B cell (primary cell): ENCODE measurements at regions of chr1 and their contacts with region 1.

Region 1: GRCh38 chr1:160460683-160461287 is 60.4 kb downstream of the VANGL2 start:
- DNase-seq: no peak
- ATAC-seq: peak; percentile 48
- H3K4me3 ChIP-seq: peak overlapping the region in 3 of 5 experiments; percentile 5 to 58 (median 24)
- H3K4me3 Mint-ChIP-seq: peak overlapping the region; percentile 80
- H3K27ac ChIP-seq: peak overlapping the region; percentile 81
- H3K27ac Mint-ChIP-seq: peak overlapping the region; percentile 92
- H3K4me1 ChIP-seq: peaks cover 46 to 47% of the 10 kb centered on the region in 2 donors
- H3K4me1 Mint-ChIP-seq: peaks cover 62% of the 10 kb centered on the region
- H3K27me3 ChIP-seq: no peaks in the 10 kb centered on the region
- H3K27me3 Mint-ChIP-seq: no peaks in the 10 kb centered on the region
- CTCF ChIP-seq: no peak

Region 2: DNA sequence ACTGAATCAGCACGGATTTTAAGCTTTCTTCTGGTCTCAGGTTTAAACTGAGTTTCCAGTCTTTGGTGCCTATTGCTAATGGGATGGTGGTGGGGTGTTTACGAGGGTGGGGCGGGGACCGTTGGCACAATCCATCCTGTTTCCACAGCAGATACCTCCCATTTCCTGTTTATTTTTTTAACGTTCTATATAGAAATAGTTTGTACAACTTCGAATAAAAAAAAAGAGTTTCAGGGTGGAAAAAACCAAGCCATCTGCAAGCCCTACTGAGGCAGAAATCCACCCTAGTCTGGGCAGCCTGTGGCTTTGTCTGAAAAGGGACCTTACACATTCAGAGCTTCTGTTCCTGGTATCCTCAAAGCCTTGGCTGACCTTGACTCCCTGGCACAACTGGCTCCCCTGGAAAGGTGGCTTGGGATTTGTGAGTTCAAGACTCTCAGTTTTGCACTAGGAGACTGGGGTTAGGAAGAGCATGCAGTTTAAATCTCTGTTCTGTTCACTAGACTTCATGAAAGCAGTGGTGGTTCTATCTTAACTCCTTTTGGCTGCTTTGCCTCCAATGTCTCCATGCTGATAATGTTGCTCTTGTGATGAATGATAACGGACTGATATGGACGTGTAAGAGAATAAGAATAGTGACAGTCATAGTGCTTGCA is 13.7 kb before region 1 on chr1:
- CTCF ChIA-PET with region 1: interaction called, 5 read pairs
- POLR2A ChIA-PET with region 1: interaction called, 4 read pairs
- intact Hi-C with region 1: loop called (anchors 2 kb)
- DNase-seq: no peak
- ATAC-seq: no peak
- H3K4me3 ChIP-seq: no peak overlapping the region
- H3K4me3 Mint-ChIP-seq: peak overlapping the region; percentile 24
- H3K27ac ChIP-seq: peak overlapping the region in 1 of 2 donors; percentile 39
- H3K27ac Mint-ChIP-seq: peak overlapping the region; percentile 72
- H3K4me1 ChIP-seq: peaks cover 43 to 44% of the 10 kb centered on the region in 2 donors
- H3K4me1 Mint-ChIP-seq: peaks cover 66% of the 10 kb centered on the region
- H3K27me3 ChIP-seq: no peaks in the 10 kb centered on the region
- H3K27me3 Mint-ChIP-seq: no peaks in the 10 kb centered on the region
- CTCF ChIP-seq: no peak

Region 3: GRCh38 chr1:160474392-160475242 is 13.8 kb after region 1 on chr1:
- CTCF ChIA-PET with region 1: interaction called, 4 read pairs
- POLR2A ChIA-PET with region 1: no interaction called
- intact Hi-C with region 1: loop called (anchors 2 kb)
- DNase-seq: peak; percentile 54
- ATAC-seq: peak; percentile 94
- H3K4me3 ChIP-seq: peak overlapping the region in 2 of 5 experiments; percentile 20 to 42
- H3K4me3 Mint-ChIP-seq: no peak overlapping the region
- H3K27ac ChIP-seq: peak overlapping the region; percentile 78 to 87
- H3K27ac Mint-ChIP-seq: no peak overlapping the region
- H3K4me1 ChIP-seq: peaks cover 49 to 54% of the 10 kb centered on the region in 2 donors
- H3K4me1 Mint-ChIP-seq: peaks cover 26% of the 10 kb centered on the region
- H3K27me3 ChIP-seq: no peaks in the 10 kb centered on the region
- H3K27me3 Mint-ChIP-seq: no peaks in the 10 kb centered on the region
- CTCF ChIP-seq: no peak

Region 4: GRCh38 chr1:160534823-160535605 is 74.2 kb after region 1 on chr1:
- CTCF ChIA-PET with region 1: no interaction called
- POLR2A ChIA-PET with region 1: no interaction called
- intact Hi-C with region 1: no loop called
- DNase-seq: no peak
- ATAC-seq: no peak
- H3K4me3 ChIP-seq: no peak overlapping the region
- H3K4me3 Mint-ChIP-seq: no peak overlapping the region
- H3K27ac ChIP-seq: no peak overlapping the region
- H3K27ac Mint-ChIP-seq: no peak overlapping the region
- H3K4me1 ChIP-seq: peaks cover 14 to 15% of the 10 kb centered on the region in 2 donors
- H3K4me1 Mint-ChIP-seq: peaks cover 16% of the 10 kb centered on the region
- H3K27me3 ChIP-seq: no peaks in the 10 kb centered on the region
- H3K27me3 Mint-ChIP-seq: no peaks in the 10 kb centered on the region
- CTCF ChIP-seq: no peak

Region 5: GRCh38 chr1:160748181-160748877 is 287.5 kb after region 1 on chr1:
- CTCF ChIA-PET with region 1: no interaction called
- POLR2A ChIA-PET with region 1: no interaction called
- intact Hi-C with region 1: no loop called
- DNase-seq: no peak
- ATAC-seq: no peak
- H3K4me3 ChIP-seq: no peak overlapping the region
- H3K4me3 Mint-ChIP-seq: no peak overlapping the region
- H3K27ac ChIP-seq: no peak overlapping the region
- H3K27ac Mint-ChIP-seq: no peak overlapping the region
- H3K4me1 ChIP-seq: peaks cover 8 to 11% of the 10 kb centered on the region in 2 donors
- H3K4me1 Mint-ChIP-seq: peaks cover 30% of the 10 kb centered on the region
- H3K27me3 ChIP-seq: no peaks in the 10 kb centered on the region
- H3K27me3 Mint-ChIP-seq: no peaks in the 10 kb centered on the region
- CTCF ChIP-seq: peak; percentile 30